RWPE1 (cell line): ENCODE measurements at regions of chr6 and their contacts with region 1.

Region 1: GRCh38 chr6:69555088-69555638 is 241.6 kb downstream of the LMBRD1 start:
- DNase-seq: no peak
- H3K27ac ChIP-seq: no peak overlapping the region
- CTCF ChIP-seq: no peak

Region 2: DNA sequence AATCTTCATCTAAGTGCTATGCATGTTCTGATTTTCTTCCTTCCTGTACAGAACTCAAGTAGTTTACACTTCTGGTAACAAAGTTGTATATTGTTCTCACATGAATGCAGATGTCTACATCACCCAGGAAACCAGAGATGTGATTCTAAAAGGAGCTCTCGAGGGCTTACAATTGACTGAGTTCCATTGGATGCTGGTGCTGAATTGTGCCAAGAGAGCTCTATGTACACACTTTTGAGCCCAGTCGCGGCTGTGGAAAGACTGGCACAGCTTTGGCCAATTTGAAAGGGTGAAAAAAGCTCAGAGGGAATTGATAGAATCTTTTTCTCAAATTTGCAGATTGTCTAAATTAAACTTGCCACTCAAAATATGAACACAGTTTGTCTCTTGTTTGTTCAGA is 99.1 kb before region 1 on chr6:
- CTCF ChIA-PET with region 1: no interaction called
- POLR2A ChIA-PET with region 1: interaction called, 14 read pairs
- DNase-seq: no peak
- H3K27ac ChIP-seq: no peak overlapping the region
- CTCF ChIP-seq: no peak